PC-9 (cell line): ENCODE measurements at regions of chr9 and their contacts with region 1.

Region 1: DNA sequence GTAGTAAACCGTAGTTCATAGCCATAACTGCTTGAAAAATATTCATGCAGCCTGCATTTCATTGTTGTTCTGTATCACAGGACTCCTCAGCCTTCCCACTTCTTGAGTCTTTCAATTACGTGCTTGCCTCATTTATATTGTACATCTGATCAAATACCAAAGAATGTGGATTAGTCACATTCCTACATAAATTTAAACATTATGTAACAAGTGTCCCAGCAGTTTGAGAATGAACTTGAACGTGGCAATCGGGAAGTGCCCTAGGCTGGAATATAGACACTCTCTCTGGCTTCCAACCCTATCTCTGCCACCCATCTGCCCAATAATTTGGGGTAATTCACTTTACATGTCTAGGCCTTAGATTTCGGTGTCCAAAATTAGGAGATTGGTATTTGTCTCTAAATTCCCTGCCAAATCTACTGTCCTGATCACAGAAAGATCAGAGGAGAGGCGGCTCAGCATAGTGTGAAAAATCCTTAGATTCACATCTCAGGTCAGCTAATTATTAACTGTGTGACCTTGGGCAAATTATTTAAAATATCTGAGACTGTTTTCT is 215.0 kb upstream of the RFX3 start:
- DNase-seq: peak; percentile 25 to 89
- H3K4me3 ChIP-seq: peak overlapping the region; percentile 20; the same call in 1 of the 2 replicates
- H3K27ac ChIP-seq: peak overlapping the region; percentile 80
- H3K4me1 ChIP-seq: peaks cover 35% of the 10 kb centered on the region
- H3K27me3 ChIP-seq: no peaks in the 10 kb centered on the region
- CTCF ChIP-seq: no peak

Region 2: DNA sequence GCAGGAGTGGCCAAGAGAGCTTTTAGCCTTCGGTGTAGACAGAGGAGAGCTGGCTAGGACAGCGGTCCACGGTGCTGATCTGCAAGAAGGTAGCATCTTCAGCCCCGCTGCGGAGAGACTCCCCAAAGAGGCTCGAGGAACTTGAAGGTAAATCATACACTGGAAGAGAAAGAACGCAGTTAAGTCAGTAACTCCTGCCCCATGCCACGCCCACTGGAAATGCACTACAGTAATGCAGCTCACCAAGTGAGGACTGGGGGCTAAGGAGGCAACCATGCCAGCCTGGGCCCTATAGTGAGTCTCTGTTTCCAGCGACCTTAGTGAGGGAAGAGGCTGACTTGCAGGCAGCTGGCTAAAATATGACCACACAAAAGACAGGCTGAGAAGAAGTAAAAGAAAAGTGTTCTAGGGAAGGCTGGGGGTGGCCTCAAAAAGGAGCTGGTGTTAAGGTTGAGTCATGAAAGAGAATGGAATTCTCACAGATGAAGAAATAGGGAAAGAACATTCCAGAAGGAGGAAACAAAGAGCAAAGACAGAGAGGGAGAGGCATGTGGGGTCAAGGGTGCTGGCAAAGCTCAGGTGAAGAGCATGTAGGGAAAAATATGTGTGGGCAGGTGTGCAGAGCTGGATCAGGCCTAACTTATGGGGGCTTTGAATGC is 87.6 kb after region 1 on chr9:
- CTCF ChIA-PET with region 1: no interaction called
- POLR2A ChIA-PET with region 1: no interaction called
- intact Hi-C with region 1: loop called (anchors 2 kb)
- DNase-seq: peak in 1 of 2 experiments; percentile 51
- H3K4me3 ChIP-seq: no peak overlapping the region
- H3K27ac ChIP-seq: no peak overlapping the region
- H3K4me1 ChIP-seq: peaks cover 29% of the 10 kb centered on the region
- H3K27me3 ChIP-seq: no peaks in the 10 kb centered on the region
- CTCF ChIP-seq: no peak

Region 3: GRCh38 chr9:3863111-3863528 is 122.3 kb after region 1 on chr9:
- CTCF ChIA-PET with region 1: no interaction called
- POLR2A ChIA-PET with region 1: no interaction called
- intact Hi-C with region 1: loop called (anchors 5 kb)
- DNase-seq: peak; percentile 50 to 80
- H3K4me3 ChIP-seq: peak overlapping the region; percentile 26; the same call in 1 of the 2 replicates
- H3K27ac ChIP-seq: peak overlapping the region; percentile 73
- H3K4me1 ChIP-seq: peaks cover 15% of the 10 kb centered on the region
- H3K27me3 ChIP-seq: no peaks in the 10 kb centered on the region
- CTCF ChIP-seq: no peak

Region 4: GRCh38 chr9:4062966-4063365 is 322.1 kb after region 1 on chr9:
- CTCF ChIA-PET with region 1: no interaction called
- POLR2A ChIA-PET with region 1: interaction called, 12 read pairs
- intact Hi-C with region 1: no loop called
- DNase-seq: no peak
- H3K4me3 ChIP-seq: no peak overlapping the region
- H3K27ac ChIP-seq: no peak overlapping the region
- H3K4me1 ChIP-seq: no peaks in the 10 kb centered on the region
- H3K27me3 ChIP-seq: no peaks in the 10 kb centered on the region
- CTCF ChIP-seq: no peak

Region 5: GRCh38 chr9:4126180-4126865 is 385.5 kb after region 1 on chr9:
- CTCF ChIA-PET with region 1: no interaction called
- POLR2A ChIA-PET with region 1: no interaction called
- intact Hi-C with region 1: loop called (anchors 1 kb)
- DNase-seq: peak in 1 of 2 experiments; percentile 76
- H3K4me3 ChIP-seq: no peak overlapping the region
- H3K27ac ChIP-seq: peak overlapping the region; percentile 89
- H3K4me1 ChIP-seq: peaks cover 29% of the 10 kb centered on the region
- H3K27me3 ChIP-seq: no peaks in the 10 kb centered on the region
- CTCF ChIP-seq: no peak